Activated CD4-positive, alpha-beta memory T cell treated with anti-CD3 and anti-CD28 coated beads, Interleukin-2, amount 10 ng/mL, durations not matched to agents 7 days and 5 days (primary cell): ENCODE measurements at regions of chr6 and their contacts with region 1.

Region 1: DNA sequence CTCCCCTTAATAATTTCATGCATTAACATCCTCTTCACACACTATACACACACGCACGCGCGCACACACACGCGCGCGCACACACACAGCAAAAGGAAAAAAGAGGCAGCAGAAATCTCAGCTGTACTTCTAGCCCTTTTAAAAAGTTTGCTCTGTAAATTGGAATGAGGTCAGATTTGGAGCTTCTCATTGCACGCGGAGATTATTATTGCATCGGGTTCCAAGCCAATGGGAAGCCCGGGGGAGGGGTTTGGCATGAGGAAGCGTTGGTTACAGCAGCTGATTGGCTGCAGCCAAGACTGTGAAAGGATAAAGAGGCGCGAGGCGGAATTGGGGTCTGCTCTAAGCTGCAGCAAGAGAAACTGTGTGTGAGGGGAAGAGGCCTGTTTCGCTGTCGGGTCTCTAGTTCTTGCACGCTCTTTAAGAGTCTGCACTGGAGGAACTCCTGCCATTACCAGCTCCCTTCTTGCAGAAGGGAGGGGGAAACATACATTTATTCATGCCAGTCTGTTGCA is at the start of gene SOX4:
- DNase-seq: peak; percentile 52
- H3K4me3 Mint-ChIP-seq: peak within 1 kb of the TSS; percentile 76
- H3K27ac Mint-ChIP-seq: peak within 1 kb of the TSS; percentile 66
- H3K4me1 Mint-ChIP-seq: peaks cover 22% of the 10 kb centered on the region
- H3K27me3 Mint-ChIP-seq: peaks cover 47% of the 10 kb centered on the region
- total RNA-seq, gene SOX4: 0.20 TPM

Region 2: GRCh38 chr6:20564269-20564668 is 1029.2 kb before region 1 on chr6:
- CTCF ChIA-PET with region 1: interaction called, 80 read pairs
- POLR2A ChIA-PET with region 1: interaction called, 11 read pairs
- DNase-seq: no peak
- H3K4me3 Mint-ChIP-seq: no peak overlapping the region
- H3K27ac Mint-ChIP-seq: no peak overlapping the region
- H3K4me1 Mint-ChIP-seq: peaks cover 12% of the 10 kb centered on the region
- H3K27me3 Mint-ChIP-seq: no peaks in the 10 kb centered on the region

Region 3: DNA sequence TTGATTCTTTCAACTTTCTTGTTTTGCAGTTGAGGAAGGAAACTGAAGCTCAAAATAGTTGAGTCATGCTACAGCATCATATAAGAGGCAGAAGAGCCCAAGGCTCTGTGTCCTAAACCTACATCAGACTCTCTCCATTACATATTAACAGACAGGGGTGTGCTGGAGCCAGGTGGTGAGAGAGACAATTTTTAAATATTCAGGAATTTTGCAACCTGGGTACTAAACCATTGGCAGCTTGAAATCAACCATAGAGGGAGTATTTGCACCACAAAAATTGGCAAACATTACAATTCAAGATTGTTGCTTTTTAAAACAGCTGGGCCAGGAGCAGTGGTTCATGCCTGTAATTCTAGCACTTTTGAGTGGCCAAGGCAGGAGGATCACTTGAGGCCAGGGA is 65.7 kb before region 1 on chr6:
- CTCF ChIA-PET with region 1: interaction called, 10 read pairs
- POLR2A ChIA-PET with region 1: no interaction called
- DNase-seq: no peak
- H3K4me3 Mint-ChIP-seq: no peak overlapping the region
- H3K27ac Mint-ChIP-seq: no peak overlapping the region
- H3K4me1 Mint-ChIP-seq: no peaks in the 10 kb centered on the region
- H3K27me3 Mint-ChIP-seq: no peaks in the 10 kb centered on the region

Region 4: DNA sequence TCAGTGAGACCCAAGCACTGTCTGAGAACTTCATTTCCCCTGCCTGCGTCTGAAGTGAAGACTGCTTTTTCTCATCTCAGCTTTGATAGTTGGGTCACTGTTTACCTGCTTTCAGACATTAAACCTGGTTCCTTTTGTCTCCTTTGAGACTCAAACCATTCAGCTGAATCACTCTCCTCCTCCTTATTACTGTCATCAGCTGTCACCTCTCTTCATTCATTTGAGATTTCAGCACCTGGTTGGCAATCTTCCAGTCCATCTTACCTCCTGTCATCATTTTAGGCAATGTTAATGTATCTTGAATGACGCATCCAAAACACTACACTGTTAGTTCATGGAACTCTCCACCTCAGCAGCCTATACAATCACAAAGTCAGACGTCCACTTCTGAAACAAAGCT is 34.2 kb before region 1 on chr6:
- CTCF ChIA-PET with region 1: no interaction called
- POLR2A ChIA-PET with region 1: no interaction called
- DNase-seq: no peak
- H3K4me3 Mint-ChIP-seq: no peak overlapping the region
- H3K27ac Mint-ChIP-seq: no peak overlapping the region
- H3K4me1 Mint-ChIP-seq: no peaks in the 10 kb centered on the region
- H3K27me3 Mint-ChIP-seq: no peaks in the 10 kb centered on the region